ENCODE measurements at regions of chrX and their contacts with region 1.

Region 1: GRCh38 chrX:154051201-154051810 is 31.6 kb upstream of the IRAK1 start:
- DNase-seq: peak in 4 of 5 donors; percentile 54 to 73 (median 64)
- ATAC-seq: peak in 3 of 4 donors; percentile 48 to 60 (median 58)
- H3K4me3 ChIP-seq: no peak overlapping the region
- H3K27ac ChIP-seq: peak overlapping the region in 2 of 12 donors; percentile 19 to 50
- H3K4me1 ChIP-seq: peaks cover 0 to 59% (median 34%) of the 10 kb centered on the region in 12 donors
- H3K27me3 ChIP-seq: peaks cover 0 to 26% (median 0%) of the 10 kb centered on the region in 9 donors
- CTCF ChIP-seq: peak; percentile 52 to 80 (median 66)
- POLR2A ChIP-seq: no peak

Region 2: GRCh38 chrX:153966283-153966688 is 85.0 kb before region 1 on chrX:
- intact Hi-C with region 1: no loop called
- DNase-seq: peak in 2 of 5 donors; percentile 40 to 51
- ATAC-seq: peak in 2 of 4 donors; percentile 6 to 11
- H3K4me3 ChIP-seq: no peak overlapping the region
- H3K27ac ChIP-seq: peak overlapping the region in 5 of 12 donors; percentile 22 to 100 (median 83)
- H3K4me1 ChIP-seq: peaks cover 0 to 60% (median 35%) of the 10 kb centered on the region in 12 donors
- H3K27me3 ChIP-seq: peaks cover 0 to 8% (median 0%) of the 10 kb centered on the region in 9 donors
- CTCF ChIP-seq: no peak
- POLR2A ChIP-seq: no peak

Region 3: DNA sequence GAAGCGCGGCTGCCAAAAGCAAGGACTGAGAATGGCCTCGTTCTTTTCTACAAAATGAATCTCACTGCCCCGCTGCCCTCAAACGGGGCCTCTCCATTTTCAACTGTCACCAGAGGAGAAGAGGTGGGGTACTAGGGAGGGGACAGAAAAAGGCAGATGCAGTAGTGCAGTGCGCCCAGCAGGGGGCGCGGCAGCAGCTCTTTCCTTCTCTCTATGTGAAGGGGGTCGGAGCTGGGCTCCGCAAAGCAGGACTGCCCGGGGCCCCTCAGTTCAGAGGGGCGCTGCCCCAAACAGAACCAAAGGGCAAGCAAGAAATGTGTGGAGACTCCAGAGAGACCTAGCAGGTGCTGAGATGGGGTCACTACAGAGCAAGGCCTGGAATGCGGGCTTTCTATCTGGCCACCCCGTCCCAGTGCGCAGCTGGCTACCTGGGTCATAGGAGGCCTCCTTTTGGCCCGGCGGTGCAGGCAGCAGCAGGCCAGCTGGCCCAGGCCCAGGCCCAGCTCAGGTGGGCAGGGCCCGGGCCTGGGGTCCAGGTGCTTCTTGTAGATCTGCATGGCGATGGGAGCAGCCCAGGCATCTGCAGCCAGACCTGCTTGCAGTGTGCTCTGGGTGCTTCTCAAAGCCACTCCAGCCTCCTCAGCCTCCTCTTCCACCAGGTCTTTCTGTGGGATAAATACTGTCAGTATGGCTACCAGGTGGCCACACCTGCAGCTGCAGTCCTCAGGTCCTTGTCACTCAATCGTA is 37.5 kb before region 1 on chrX:
- intact Hi-C with region 1: loop called in 7 of 10 experiments (anchors 5 kb)
- DNase-seq: peak in 1 of 5 donors; percentile 65
- ATAC-seq: peak in 3 of 4 donors; percentile 47 to 75 (median 69)
- H3K4me3 ChIP-seq: no peak overlapping the region
- H3K27ac ChIP-seq: no peak overlapping the region
- H3K4me1 ChIP-seq: peaks cover 0 to 13% (median under 1%) of the 10 kb centered on the region in 12 donors
- H3K27me3 ChIP-seq: peaks cover 0 to 35% (median 0%) of the 10 kb centered on the region in 9 donors
- CTCF ChIP-seq: peak; percentile 73 to 97 (median 80)
- POLR2A ChIP-seq: no peak

Region 4: GRCh38 chrX:154123241-154124219 is 72.2 kb after region 1 on chrX:
- intact Hi-C with region 1: loop called in 1 of 10 experiments (anchors 2 kb)
- DNase-seq: peak in 3 of 5 donors; percentile 31 to 40 (median 36)
- ATAC-seq: peak; percentile 33 to 91 (median 76)
- H3K4me3 ChIP-seq: no peak overlapping the region
- H3K27ac ChIP-seq: peak overlapping the region in 1 of 12 donors; percentile 25
- H3K4me1 ChIP-seq: peaks cover 0 to 23% (median 0%) of the 10 kb centered on the region in 12 donors
- H3K27me3 ChIP-seq: peaks cover 0 to 31% (median 0%) of the 10 kb centered on the region in 9 donors
- CTCF ChIP-seq: no peak
- POLR2A ChIP-seq: no peak